ENCODE measurements at regions of chr1 and their contacts with region 1.

Region 1: DNA sequence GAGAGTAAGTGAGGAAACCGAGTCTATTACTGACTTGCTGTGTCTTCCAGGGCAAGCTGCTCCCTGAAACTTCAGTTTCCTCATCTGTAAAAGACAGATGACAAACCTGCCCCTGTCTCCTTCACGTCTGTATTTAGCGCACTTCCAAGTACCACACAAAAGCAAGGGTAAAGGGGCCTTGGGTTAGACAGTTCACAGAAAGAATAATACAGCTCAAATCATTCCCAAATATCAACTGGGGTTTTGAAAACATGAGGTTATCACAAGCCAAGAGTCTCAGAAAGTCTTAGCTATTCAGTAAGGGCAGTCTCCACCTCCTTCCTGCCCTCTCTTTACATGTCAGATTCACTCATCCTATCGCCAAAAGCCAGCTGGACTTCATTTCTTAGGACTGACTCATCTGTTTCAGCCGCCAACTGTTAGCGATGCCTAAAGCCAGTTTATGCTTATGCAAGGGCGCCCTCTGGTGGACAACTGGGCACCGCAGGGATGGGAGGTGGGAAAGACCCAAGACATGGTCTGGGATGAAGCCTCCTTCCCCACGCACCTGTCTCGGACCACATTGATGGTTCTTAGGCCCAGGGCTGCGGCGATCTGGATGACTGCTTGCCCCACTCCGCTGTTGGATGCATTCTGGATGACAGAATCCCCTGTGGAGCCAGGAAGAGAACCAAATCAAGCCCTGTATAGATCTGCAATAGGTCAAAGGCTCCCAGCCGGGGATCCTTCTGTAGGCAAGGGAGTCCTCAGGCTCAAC is 21.1 kb upstream of the SRSF4 start:
- DNase-seq: peak; percentile 86
- ATAC-seq: peak; percentile 97
- H3K4me3 ChIP-seq: no peak overlapping the region
- H3K4me3 Mint-ChIP-seq: no peak overlapping the region
- H3K27ac ChIP-seq: no peak overlapping the region
- H3K27ac Mint-ChIP-seq: peak overlapping the region; percentile 16
- H3K4me1 ChIP-seq: peaks cover 0 to 4% of the 10 kb centered on the region in 2 donors
- H3K4me1 Mint-ChIP-seq: peaks cover 2% of the 10 kb centered on the region
- H3K27me3 ChIP-seq: no peaks in the 10 kb centered on the region
- H3K27me3 Mint-ChIP-seq: no peaks in the 10 kb centered on the region
- CTCF ChIP-seq: peak; percentile 98

Region 2: DNA sequence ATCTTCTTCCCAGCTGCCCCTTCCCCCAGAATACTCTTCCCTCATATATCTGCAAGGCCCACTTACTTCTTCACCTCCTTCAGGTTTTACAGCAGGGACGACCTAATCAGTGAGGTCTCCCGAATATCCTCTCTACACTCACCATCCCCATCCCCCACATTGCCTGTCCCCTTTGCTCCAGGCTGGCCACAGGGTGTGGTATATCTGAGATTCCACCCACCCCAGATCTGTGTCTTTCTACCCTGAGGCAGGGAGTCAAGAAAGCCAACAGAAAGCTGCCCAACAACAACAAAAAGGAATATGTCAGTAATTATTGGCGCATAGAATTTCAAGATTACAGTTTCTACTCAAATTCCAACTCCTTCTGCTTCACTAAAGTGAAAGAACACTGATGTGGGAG is 420.8 kb before region 1 on chr1:
- CTCF ChIA-PET with region 1: interaction called, 12 read pairs
- POLR2A ChIA-PET with region 1: no interaction called
- intact Hi-C with region 1: no loop called
- DNase-seq: no peak
- ATAC-seq: no peak
- H3K4me3 ChIP-seq: no peak overlapping the region
- H3K4me3 Mint-ChIP-seq: no peak overlapping the region
- H3K27ac ChIP-seq: no peak overlapping the region
- H3K27ac Mint-ChIP-seq: no peak overlapping the region
- H3K4me1 ChIP-seq: peaks cover 4% of the 10 kb centered on the region in 2 donors
- H3K4me1 Mint-ChIP-seq: peaks cover 8% of the 10 kb centered on the region
- H3K27me3 ChIP-seq: no peaks in the 10 kb centered on the region
- H3K27me3 Mint-ChIP-seq: no peaks in the 10 kb centered on the region
- CTCF ChIP-seq: no peak

Region 3: GRCh38 chr1:29033829-29034466 is 168.8 kb before region 1 on chr1:
- CTCF ChIA-PET with region 1: interaction called, 49 read pairs
- POLR2A ChIA-PET with region 1: no interaction called
- intact Hi-C with region 1: loop called (anchors 2 kb)
- DNase-seq: peak; percentile 65
- ATAC-seq: no peak
- H3K4me3 ChIP-seq: no peak overlapping the region
- H3K4me3 Mint-ChIP-seq: no peak overlapping the region
- H3K27ac ChIP-seq: no peak overlapping the region
- H3K27ac Mint-ChIP-seq: no peak overlapping the region
- H3K4me1 ChIP-seq: no peaks in the 10 kb centered on the region
- H3K4me1 Mint-ChIP-seq: no peaks in the 10 kb centered on the region
- H3K27me3 ChIP-seq: no peaks in the 10 kb centered on the region
- H3K27me3 Mint-ChIP-seq: no peaks in the 10 kb centered on the region
- CTCF ChIP-seq: peak; percentile 91

Region 4: GRCh38 chr1:29043274-29043965 is 159.3 kb before region 1 on chr1:
- CTCF ChIA-PET with region 1: interaction called, 11 read pairs
- POLR2A ChIA-PET with region 1: no interaction called
- intact Hi-C with region 1: no loop called
- DNase-seq: no peak
- ATAC-seq: no peak
- H3K4me3 ChIP-seq: no peak overlapping the region
- H3K4me3 Mint-ChIP-seq: no peak overlapping the region
- H3K27ac ChIP-seq: no peak overlapping the region
- H3K27ac Mint-ChIP-seq: no peak overlapping the region
- H3K4me1 ChIP-seq: no peaks in the 10 kb centered on the region
- H3K4me1 Mint-ChIP-seq: no peaks in the 10 kb centered on the region
- H3K27me3 ChIP-seq: no peaks in the 10 kb centered on the region
- H3K27me3 Mint-ChIP-seq: no peaks in the 10 kb centered on the region
- CTCF ChIP-seq: no peak

Region 5: GRCh38 chr1:29124366-29125236 is 78.2 kb before region 1 on chr1:
- CTCF ChIA-PET with region 1: interaction called, 12 read pairs
- POLR2A ChIA-PET with region 1: no interaction called
- intact Hi-C with region 1: loop called (anchors 1 kb)
- DNase-seq: peak; percentile 69
- ATAC-seq: peak; percentile 54
- H3K4me3 ChIP-seq: peak overlapping the region in 4 of 5 experiments; percentile 49 to 66 (median 58)
- H3K4me3 Mint-ChIP-seq: peak overlapping the region; percentile 85
- H3K27ac ChIP-seq: no peak overlapping the region
- H3K27ac Mint-ChIP-seq: no peak overlapping the region
- H3K4me1 ChIP-seq: peaks cover 31 to 32% of the 10 kb centered on the region in 2 donors
- H3K4me1 Mint-ChIP-seq: peaks cover 18% of the 10 kb centered on the region
- H3K27me3 ChIP-seq: peaks cover 0 to 50% (median 17%) of the 10 kb centered on the region in 4 experiments
- H3K27me3 Mint-ChIP-seq: peaks cover 11% of the 10 kb centered on the region
- CTCF ChIP-seq: no peak

Region 6: DNA sequence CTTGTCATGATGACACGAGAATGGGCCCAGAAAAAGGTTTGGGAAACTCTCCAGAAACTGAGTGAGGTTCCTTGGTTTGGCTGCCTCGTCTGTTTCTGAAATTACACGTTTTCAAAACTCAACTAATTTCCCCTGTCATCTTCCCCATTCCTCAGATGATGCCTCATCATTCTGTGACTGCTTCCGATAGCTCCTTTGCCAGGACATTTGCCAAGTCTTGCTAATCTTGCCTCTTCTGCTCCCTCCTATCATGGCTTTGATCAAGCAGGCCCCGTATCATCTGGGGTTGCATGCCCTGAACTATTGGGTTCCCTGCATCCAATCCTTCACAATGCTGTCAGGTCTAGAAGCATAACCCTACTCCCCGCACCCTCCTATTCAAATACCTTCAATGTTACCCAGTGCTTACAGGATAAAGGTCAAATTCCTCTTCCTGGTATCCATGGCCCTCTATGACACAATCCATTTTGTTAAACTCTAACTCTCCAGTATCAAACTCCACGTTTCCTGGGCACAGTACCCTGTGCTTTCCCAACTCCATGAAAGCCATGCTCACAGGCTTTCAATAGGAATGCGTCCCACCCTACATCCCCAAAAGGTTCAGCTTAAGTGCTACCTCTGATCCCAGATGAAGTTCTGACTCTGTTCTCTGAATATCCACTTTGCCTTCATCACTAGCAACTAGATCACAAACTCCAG is 56.9 kb before region 1 on chr1:
- CTCF ChIA-PET with region 1: no interaction called
- POLR2A ChIA-PET with region 1: no interaction called
- intact Hi-C with region 1: no loop called
- DNase-seq: no peak
- ATAC-seq: no peak
- H3K4me3 ChIP-seq: no peak overlapping the region
- H3K4me3 Mint-ChIP-seq: no peak overlapping the region
- H3K27ac ChIP-seq: no peak overlapping the region
- H3K27ac Mint-ChIP-seq: no peak overlapping the region
- H3K4me1 ChIP-seq: no peaks in the 10 kb centered on the region
- H3K4me1 Mint-ChIP-seq: peaks cover 3% of the 10 kb centered on the region
- H3K27me3 ChIP-seq: no peaks in the 10 kb centered on the region
- H3K27me3 Mint-ChIP-seq: no peaks in the 10 kb centered on the region
- CTCF ChIP-seq: no peak

Region 7: GRCh38 chr1:29171089-29171488 is 31.7 kb before region 1 on chr1:
- CTCF ChIA-PET with region 1: interaction called, 15 read pairs
- POLR2A ChIA-PET with region 1: no interaction called
- intact Hi-C with region 1: no loop called
- DNase-seq: no peak
- ATAC-seq: peak; percentile 56
- H3K4me3 ChIP-seq: no peak overlapping the region
- H3K4me3 Mint-ChIP-seq: peak overlapping the region; percentile 60
- H3K27ac ChIP-seq: peak overlapping the region in 1 of 2 donors; percentile 5
- H3K27ac Mint-ChIP-seq: no peak overlapping the region
- H3K4me1 ChIP-seq: peaks cover 17 to 23% of the 10 kb centered on the region in 2 donors
- H3K4me1 Mint-ChIP-seq: peaks cover 43% of the 10 kb centered on the region
- H3K27me3 ChIP-seq: no peaks in the 10 kb centered on the region
- H3K27me3 Mint-ChIP-seq: no peaks in the 10 kb centered on the region
- CTCF ChIP-seq: no peak

Region 8: GRCh38 chr1:29181413-29182225 is 21.1 kb before region 1 on chr1 and contains the start of gene SRSF4:
- CTCF ChIA-PET with region 1: interaction called, 52 read pairs
- POLR2A ChIA-PET with region 1: interaction called, 3 read pairs
- intact Hi-C with region 1: loop called (anchors 1 kb)
- DNase-seq: peak; percentile 99
- ATAC-seq: peak; percentile 93
- H3K4me3 ChIP-seq: peak within 1 kb of the TSS; percentile 85 to 100 (median 95)
- H3K4me3 Mint-ChIP-seq: peak within 1 kb of the TSS; percentile 94
- H3K27ac ChIP-seq: peak within 1 kb of the TSS; percentile 99
- H3K27ac Mint-ChIP-seq: peak within 1 kb of the TSS; percentile 95
- H3K4me1 ChIP-seq: peaks cover 32 to 42% of the 10 kb centered on the region in 2 donors
- H3K4me1 Mint-ChIP-seq: peaks cover 42% of the 10 kb centered on the region
- H3K27me3 ChIP-seq: no peaks in the 10 kb centered on the region
- H3K27me3 Mint-ChIP-seq: no peaks in the 10 kb centered on the region
- CTCF ChIP-seq: peak; percentile 79
- total RNA-seq, gene SRSF4: 93.5 and 100 TPM in 2 replicates

Measured in B cell (primary cell).